ENCODE measurements at regions of chr15 and their contacts with region 1.

Region 1: DNA sequence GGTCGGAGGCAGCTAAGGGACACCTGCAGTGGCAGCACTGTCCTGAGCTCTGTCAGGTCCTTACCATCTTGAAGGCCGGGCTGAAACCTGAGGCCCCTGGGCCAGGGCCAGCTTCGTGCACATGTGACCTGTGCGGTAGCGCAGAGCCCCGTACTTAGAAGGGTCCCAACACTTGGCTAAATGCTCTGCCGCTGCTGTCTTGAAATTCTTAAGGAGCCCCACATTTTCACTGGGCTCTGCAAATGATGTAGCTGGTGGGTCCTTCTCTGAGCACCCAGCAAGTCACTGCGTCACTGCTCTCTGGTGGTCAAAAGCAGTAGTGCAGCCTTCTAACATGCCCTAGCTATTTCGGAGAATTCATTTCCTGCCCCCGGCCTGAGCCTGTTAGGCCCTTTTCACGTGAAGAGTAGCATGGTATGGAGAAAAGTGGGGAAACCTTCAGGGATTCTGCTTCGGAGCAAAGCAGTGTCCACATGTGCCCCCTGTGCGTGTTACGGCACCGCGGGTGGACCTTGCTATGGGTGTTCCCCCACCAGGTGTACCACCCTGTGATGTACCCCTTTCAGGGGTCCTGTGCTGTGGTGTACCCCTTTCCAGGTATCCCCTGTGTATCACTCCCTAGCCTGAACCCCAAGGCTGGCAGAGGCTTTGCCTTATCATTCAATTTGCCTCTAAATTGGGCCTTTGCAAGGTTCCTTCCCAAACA is 79.7 kb downstream of the TMEM266 start:
- DNase-seq: peak; percentile 70
- H3K4me3 ChIP-seq: peak overlapping the region in 1 of 3 experiments; percentile 0
- H3K27ac ChIP-seq: no peak overlapping the region
- H3K4me1 ChIP-seq: peaks cover 10% of the 10 kb centered on the region
- H3K27me3 ChIP-seq: peaks cover 2 to 8% of the 10 kb centered on the region in 2 experiments
- CTCF ChIP-seq: peak; percentile 88 to 94
- POLR2A ChIP-seq: no peak

Region 2: DNA sequence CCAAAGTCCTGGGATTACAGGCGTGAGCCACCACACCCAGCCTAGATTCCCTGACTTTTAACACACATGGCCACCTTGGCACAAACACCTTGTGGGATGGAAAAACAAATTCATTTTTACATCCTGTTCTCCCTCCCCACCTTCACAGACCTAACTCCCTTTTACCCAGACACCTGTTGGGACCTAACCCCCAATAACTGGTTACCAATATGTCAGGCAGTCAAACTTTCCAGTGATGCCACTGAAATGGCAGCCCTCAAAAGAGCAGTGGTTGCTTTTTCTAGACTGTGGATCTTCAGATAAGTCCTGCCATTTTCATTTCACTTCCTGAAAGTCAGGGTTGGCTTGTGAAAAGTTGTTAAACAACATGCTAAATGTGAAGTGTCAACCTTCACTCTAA is 722.9 kb before region 1 on chr15:
- CTCF ChIA-PET with region 1: no interaction called
- POLR2A ChIA-PET with region 1: no interaction called
- dilution Hi-C with region 1: no loop called
- intact Hi-C with region 1: no loop called
- DNase-seq: no peak
- H3K4me3 ChIP-seq: no peak overlapping the region
- H3K27ac ChIP-seq: no peak overlapping the region
- H3K4me1 ChIP-seq: peaks cover 2% of the 10 kb centered on the region
- H3K27me3 ChIP-seq: no peaks in the 10 kb centered on the region
- CTCF ChIP-seq: no peak
- POLR2A ChIP-seq: no peak

Region 3: GRCh38 chr15:75723847-75724660 is 415.5 kb before region 1 on chr15:
- CTCF ChIA-PET with region 1: interaction called, 17 read pairs
- POLR2A ChIA-PET with region 1: no interaction called
- dilution Hi-C with region 1: no loop called
- intact Hi-C with region 1: loop called (anchors 1 kb)
- DNase-seq: peak; percentile 84
- H3K4me3 ChIP-seq: no peak overlapping the region
- H3K27ac ChIP-seq: no peak overlapping the region
- H3K4me1 ChIP-seq: no peaks in the 10 kb centered on the region
- H3K27me3 ChIP-seq: peaks cover 4 to 7% of the 10 kb centered on the region in 2 experiments
- CTCF ChIP-seq: no peak
- POLR2A ChIP-seq: no peak

Region 4: DNA sequence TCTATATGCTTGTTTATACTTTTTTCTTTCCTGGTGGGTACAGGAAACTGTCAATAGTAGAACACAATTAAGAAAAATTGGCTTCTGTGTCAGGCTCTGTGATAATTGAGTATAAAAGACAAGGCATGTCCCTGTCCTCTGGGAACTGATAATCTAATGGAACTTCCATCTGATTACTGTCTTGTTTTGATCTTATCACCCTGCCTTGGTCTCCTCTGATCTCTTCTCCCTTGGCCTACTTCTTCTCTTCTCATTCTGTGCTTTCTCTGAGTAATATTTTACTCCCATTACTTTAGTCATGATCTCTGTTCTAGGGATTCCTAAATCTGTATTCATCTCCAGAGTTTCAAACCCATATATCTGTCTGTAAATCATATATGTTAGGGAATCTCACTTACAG is 281.6 kb before region 1 on chr15:
- CTCF ChIA-PET with region 1: no interaction called
- POLR2A ChIA-PET with region 1: no interaction called
- dilution Hi-C with region 1: no loop called
- intact Hi-C with region 1: no loop called
- DNase-seq: no peak
- H3K4me3 ChIP-seq: no peak overlapping the region
- H3K27ac ChIP-seq: no peak overlapping the region
- H3K4me1 ChIP-seq: no peaks in the 10 kb centered on the region
- H3K27me3 ChIP-seq: no peaks in the 10 kb centered on the region
- CTCF ChIP-seq: no peak
- POLR2A ChIP-seq: no peak

Region 5: GRCh38 chr15:75921729-75922703 is 217.5 kb before region 1 on chr15:
- CTCF ChIA-PET with region 1: interaction called, 12 read pairs
- POLR2A ChIA-PET with region 1: no interaction called
- dilution Hi-C with region 1: no loop called
- intact Hi-C with region 1: loop called (anchors 10 kb)
- DNase-seq: peak; percentile 77
- H3K4me3 ChIP-seq: no peak overlapping the region
- H3K27ac ChIP-seq: no peak overlapping the region
- H3K4me1 ChIP-seq: peaks cover 12% of the 10 kb centered on the region
- H3K27me3 ChIP-seq: no peaks in the 10 kb centered on the region
- CTCF ChIP-seq: peak; percentile 34 to 44
- POLR2A ChIP-seq: no peak

Region 6: DNA sequence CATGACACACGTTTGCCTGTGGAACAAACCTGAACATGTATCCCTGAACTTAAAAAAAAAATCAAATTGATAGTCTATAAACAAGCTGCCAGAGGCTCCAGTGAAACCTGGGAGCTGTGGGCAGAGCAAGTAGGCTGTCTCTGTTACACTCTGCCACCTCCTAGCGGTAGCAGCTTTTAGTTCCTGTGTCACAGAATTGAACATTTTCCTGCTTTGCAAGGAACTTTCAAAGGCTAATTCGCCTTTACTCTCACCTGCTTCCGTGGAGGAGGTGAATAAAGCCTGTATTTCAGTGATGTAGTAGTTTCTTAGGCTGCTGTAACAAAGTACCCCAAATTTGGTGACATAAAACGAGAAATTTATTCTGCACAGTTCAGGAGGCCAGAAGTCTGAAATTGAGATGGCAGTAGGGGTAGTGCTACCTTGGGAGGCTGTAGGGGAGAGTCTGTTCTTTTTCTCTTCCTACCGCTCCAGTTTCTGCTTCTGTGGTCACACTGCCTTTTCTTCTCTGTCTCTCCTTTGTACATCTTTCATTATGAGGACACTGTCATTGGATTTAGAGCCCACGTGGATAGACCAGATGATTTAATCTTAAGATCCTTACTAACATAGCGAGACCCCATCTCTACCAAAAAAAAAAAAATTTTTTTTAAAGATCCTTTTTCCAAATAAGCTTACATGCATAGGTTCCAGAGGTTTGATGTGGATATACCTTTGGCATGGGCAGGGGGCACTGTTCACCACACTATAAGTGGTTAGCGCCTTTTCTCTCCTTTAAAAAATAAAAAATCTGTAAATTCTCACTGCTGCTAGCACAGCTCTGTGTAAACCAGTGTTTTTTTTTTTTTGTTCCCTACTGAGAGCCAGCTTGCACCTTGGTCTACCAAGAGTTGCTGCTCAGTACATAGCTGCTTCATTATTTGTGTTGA is 210.6 kb before region 1 on chr15:
- CTCF ChIA-PET with region 1: interaction called, 16 read pairs
- POLR2A ChIA-PET with region 1: no interaction called
- dilution Hi-C with region 1: no loop called
- intact Hi-C with region 1: loop called (anchors 10 kb)
- DNase-seq: no peak
- H3K4me3 ChIP-seq: no peak overlapping the region
- H3K27ac ChIP-seq: no peak overlapping the region
- H3K4me1 ChIP-seq: peaks cover 13% of the 10 kb centered on the region
- H3K27me3 ChIP-seq: no peaks in the 10 kb centered on the region
- CTCF ChIP-seq: no peak
- POLR2A ChIP-seq: no peak

Region 7: GRCh38 chr15:76057332-76058000 is 82.1 kb before region 1 on chr15:
- CTCF ChIA-PET with region 1: interaction called, 183 read pairs
- POLR2A ChIA-PET with region 1: no interaction called
- dilution Hi-C with region 1: no loop called
- intact Hi-C with region 1: loop called (anchors 1 kb)
- DNase-seq: peak; percentile 49
- H3K4me3 ChIP-seq: no peak overlapping the region
- H3K27ac ChIP-seq: no peak overlapping the region
- H3K4me1 ChIP-seq: peaks cover 8% of the 10 kb centered on the region
- H3K27me3 ChIP-seq: peaks cover 35 to 58% of the 10 kb centered on the region in 2 experiments
- CTCF ChIP-seq: peak; percentile 51 to 67
- POLR2A ChIP-seq: no peak

Region 8: GRCh38 chr15:76127880-76128279 is 11.6 kb before region 1 on chr15:
- CTCF ChIA-PET with region 1: interaction called, 19 read pairs
- POLR2A ChIA-PET with region 1: no interaction called
- dilution Hi-C with region 1: no loop called
- intact Hi-C with region 1: no loop called
- DNase-seq: no peak
- H3K4me3 ChIP-seq: no peak overlapping the region
- H3K27ac ChIP-seq: no peak overlapping the region
- H3K4me1 ChIP-seq: no peaks in the 10 kb centered on the region
- H3K27me3 ChIP-seq: peaks cover 0 to 4% of the 10 kb centered on the region in 2 experiments
- CTCF ChIP-seq: no peak
- POLR2A ChIP-seq: no peak

Region 9: GRCh38 chr15:76150971-76151598 is 11.6 kb after region 1 on chr15:
- CTCF ChIA-PET with region 1: interaction called, 84 read pairs
- POLR2A ChIA-PET with region 1: no interaction called
- dilution Hi-C with region 1: no loop called
- intact Hi-C with region 1: no loop called
- DNase-seq: peak; percentile 77
- H3K4me3 ChIP-seq: no peak overlapping the region
- H3K27ac ChIP-seq: no peak overlapping the region
- H3K4me1 ChIP-seq: peaks cover 4% of the 10 kb centered on the region
- H3K27me3 ChIP-seq: peaks cover 7% of the 10 kb centered on the region in 2 experiments
- CTCF ChIP-seq: peak; percentile 77 to 94
- POLR2A ChIP-seq: no peak

Measured in endothelial cell of umbilical vein (primary cell).